Aorta (tissue), 5 donors: ENCODE measurements at regions of chr20 and their contacts with region 1.

Region 1: GRCh38 chr20:24411003-24411833 is 58.2 kb upstream of the SYNDIG1 start:
- DNase-seq: no peak
- ATAC-seq: peak; percentile 64
- H3K4me3 ChIP-seq: no peak overlapping the region
- H3K27ac ChIP-seq: peak overlapping the region; percentile 43 to 44
- H3K4me1 ChIP-seq: peaks cover 0 to 10% of the 10 kb centered on the region in 2 donors
- H3K27me3 ChIP-seq: no peaks in the 10 kb centered on the region

Region 2: DNA sequence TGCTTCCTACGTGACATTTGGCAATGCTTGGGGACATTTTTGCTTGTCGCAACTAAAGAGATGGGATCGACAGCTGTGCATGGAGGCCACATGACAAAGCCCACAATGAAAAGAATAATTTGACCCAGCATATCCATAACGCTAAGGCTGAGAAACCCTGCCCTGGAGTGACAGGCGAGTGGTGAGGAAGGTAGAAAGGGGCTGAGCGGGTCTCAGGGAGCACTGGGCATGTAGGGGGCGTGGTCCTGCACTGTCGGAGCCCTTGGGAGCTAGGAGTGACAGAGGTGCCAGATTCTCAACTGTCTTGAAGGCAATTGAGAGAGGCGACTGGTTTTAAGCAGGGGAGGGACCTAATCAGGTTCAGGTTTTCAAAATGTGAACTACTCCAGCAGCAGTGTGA is 436.3 kb before region 1 on chr20:
- intact Hi-C with region 1: no loop called
- DNase-seq: no peak
- ATAC-seq: no peak
- H3K4me3 ChIP-seq: no peak overlapping the region
- H3K27ac ChIP-seq: no peak overlapping the region
- H3K4me1 ChIP-seq: no peaks in the 10 kb centered on the region
- H3K27me3 ChIP-seq: no peaks in the 10 kb centered on the region

Region 3: DNA sequence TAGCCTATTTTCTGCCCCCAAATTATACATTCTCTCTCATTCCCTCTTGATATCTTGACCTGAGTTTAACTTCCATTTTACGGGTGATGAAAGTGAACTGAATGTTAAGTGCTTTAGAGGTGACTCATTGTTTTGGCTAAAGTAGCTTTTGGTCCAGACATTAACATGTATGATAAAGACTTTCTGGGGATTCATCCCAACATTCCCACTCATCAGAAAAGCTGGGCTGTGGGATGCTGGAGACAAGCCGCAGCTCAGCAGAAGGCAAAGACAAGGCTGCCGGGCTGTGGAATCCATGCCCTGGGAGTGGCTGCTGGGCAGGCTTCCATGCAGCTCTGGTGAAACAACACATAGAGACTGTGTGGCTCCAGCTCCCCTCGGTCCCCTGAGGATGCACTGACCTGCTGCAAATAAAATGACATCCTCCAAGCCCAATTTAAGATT is 31.7 kb before region 1 on chr20:
- intact Hi-C with region 1: loop called in 1 of 2 experiments (anchors 5 kb)
- DNase-seq: peak; percentile 73 to 78
- ATAC-seq: peak; percentile 71
- H3K4me3 ChIP-seq: no peak overlapping the region
- H3K27ac ChIP-seq: peak overlapping the region; percentile 47 to 88
- H3K4me1 ChIP-seq: peaks cover 0 to 7% of the 10 kb centered on the region in 2 donors
- H3K27me3 ChIP-seq: no peaks in the 10 kb centered on the region

Region 4: GRCh38 chr20:24469116-24469893 is 58.1 kb after region 1 on chr20 and contains the start of gene SYNDIG1:
- intact Hi-C with region 1: loop called in 1 of 2 experiments (anchors 10 kb)
- DNase-seq: peak in 1 of 2 donors; percentile 83
- ATAC-seq: peak; percentile 57
- H3K4me3 ChIP-seq: peak within 1 kb of the TSS; percentile 69 to 81
- H3K27ac ChIP-seq: peak within 1 kb of the TSS in 1 of 2 donors; percentile 24
- H3K4me1 ChIP-seq: no peaks in the 10 kb centered on the region
- H3K27me3 ChIP-seq: no peaks in the 10 kb centered on the region
- total RNA-seq, gene SYNDIG1: 4.5 to 6.2 TPM

Region 5: DNA sequence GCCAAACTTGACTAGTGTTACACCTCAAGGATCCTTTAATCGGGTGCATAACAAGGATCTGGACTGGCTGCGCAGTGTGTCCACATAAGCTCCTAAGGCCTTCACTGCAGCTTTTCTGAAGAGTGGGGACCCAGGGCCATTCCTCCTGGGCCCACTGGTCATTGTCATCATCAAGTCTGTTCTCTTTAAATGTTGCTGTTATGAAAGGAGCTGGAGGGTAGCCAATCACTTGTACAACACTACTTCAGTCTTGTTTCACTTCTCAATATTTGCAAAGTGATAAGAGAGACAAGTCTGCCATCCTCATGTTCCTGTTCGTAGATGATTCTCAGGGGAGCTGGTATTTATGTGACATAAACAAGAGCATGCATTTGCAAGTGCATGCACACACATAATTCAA is 208.0 kb after region 1 on chr20:
- intact Hi-C with region 1: no loop called
- DNase-seq: no peak
- ATAC-seq: no peak
- H3K4me3 ChIP-seq: no peak overlapping the region
- H3K27ac ChIP-seq: no peak overlapping the region
- H3K4me1 ChIP-seq: no peaks in the 10 kb centered on the region
- H3K27me3 ChIP-seq: no peaks in the 10 kb centered on the region

Region 6: GRCh38 chr20:24651171-24651975 is 240.2 kb after region 1 on chr20:
- intact Hi-C with region 1: loop called in 1 of 2 experiments (anchors 10 kb)
- DNase-seq: no peak
- ATAC-seq: no peak
- H3K4me3 ChIP-seq: no peak overlapping the region
- H3K27ac ChIP-seq: no peak overlapping the region
- H3K4me1 ChIP-seq: no peaks in the 10 kb centered on the region
- H3K27me3 ChIP-seq: no peaks in the 10 kb centered on the region